Activated naive CD4-positive, alpha-beta T cell treated with anti-CD3 and anti-CD28 coated beads, Interleukin-2, amount 10 ng/mL, durations not matched to agents 7 days and 5 days (primary cell): ENCODE measurements at regions of chr15 and their contacts with region 1.

Region 1: DNA sequence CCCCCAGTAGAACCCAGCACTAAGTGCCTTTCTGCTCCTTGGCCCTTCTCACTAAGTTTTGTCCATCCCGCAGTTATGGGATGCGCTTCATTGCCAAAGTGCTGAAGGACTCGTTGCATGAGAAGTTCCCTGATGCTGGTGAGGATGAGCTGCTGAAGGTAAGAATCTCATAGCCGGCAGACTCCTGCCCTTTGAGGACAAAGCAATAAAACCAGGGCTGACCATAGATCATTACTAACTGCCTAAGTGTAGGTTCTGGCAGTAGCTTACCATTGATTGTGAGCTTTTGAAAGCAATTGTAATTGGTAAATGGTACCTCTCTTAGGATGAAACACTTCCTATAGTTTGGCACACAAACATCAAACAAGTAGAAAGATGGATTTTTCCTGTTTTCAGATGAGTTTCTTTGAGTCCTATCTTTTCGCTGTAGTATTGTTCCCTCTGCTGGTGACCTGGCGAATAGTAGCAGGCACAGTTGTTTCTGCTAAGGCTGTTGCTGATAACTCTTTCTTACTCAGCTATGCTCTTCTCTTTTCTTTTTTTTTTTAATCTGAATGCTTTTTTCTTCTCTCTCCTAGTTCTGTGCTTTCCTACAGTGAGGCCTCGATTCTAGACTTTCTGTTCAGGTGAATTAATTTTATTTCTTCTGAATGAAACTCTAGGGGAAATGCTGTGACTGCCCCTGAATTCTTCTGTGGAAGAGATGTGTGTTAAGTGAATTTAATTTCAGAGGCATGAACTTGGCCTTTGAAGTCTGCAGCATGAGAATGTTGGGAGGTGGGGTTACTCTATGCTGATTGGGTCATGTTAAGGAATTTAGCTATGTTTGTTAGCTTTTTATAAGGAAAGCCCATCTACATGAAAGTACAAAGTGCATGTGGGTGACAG is 47.4 kb upstream of the CRTC3 start:
- DNase-seq: peak; percentile 68
- H3K4me3 Mint-ChIP-seq: no peak overlapping the region
- H3K27ac Mint-ChIP-seq: peak overlapping the region; percentile 50
- H3K4me1 Mint-ChIP-seq: peaks cover 39% of the 10 kb centered on the region
- H3K27me3 Mint-ChIP-seq: no peaks in the 10 kb centered on the region

Region 2: DNA sequence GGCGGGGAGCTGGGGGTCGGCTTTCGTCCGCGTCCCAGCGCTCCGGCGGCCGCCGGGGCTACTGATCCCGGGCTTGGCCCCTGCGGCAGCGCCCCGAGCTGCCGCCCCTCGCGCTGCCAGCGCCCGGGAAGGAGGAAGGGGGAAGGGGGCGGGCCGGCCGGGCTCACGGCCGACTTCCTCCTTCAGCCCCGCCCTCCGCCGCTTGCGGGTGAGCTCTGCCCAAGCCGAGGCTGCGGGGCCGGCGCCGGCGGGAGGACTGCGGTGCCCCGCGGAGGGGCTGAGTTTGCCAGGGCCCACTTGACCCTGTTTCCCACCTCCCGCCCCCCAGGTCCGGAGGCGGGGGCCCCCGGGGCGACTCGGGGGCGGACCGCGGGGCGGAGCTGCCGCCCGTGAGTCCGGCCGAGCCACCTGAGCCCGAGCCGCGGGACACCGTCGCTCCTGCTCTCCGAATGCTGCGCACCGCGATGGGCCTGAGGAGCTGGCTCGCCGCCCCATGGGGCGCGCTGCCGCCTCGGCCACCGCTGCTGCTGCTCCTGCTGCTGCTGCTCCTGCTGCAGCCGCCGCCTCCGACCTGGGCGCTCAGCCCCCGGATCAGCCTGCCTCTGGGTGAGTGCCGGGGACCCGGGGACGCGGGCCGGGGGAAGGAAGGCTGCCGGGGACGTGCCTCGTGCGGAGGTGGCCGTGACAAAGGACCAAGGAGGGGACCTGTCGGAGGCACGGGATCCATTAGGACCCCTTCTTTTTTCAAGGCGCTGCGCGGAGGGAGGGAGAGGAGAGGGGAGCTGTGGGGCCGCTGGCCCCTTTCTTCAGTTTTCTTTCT is 281.0 kb before region 1 on chr15 and contains the start of gene SEMA4B:
- CTCF ChIA-PET with region 1: no interaction called
- DNase-seq: peak; percentile 87
- H3K4me3 Mint-ChIP-seq: peak within 1 kb of the TSS; percentile 83
- H3K27ac Mint-ChIP-seq: peak within 1 kb of the TSS; percentile 64
- H3K4me1 Mint-ChIP-seq: peaks cover 26% of the 10 kb centered on the region
- H3K27me3 Mint-ChIP-seq: peaks cover 22% of the 10 kb centered on the region

Region 3: DNA sequence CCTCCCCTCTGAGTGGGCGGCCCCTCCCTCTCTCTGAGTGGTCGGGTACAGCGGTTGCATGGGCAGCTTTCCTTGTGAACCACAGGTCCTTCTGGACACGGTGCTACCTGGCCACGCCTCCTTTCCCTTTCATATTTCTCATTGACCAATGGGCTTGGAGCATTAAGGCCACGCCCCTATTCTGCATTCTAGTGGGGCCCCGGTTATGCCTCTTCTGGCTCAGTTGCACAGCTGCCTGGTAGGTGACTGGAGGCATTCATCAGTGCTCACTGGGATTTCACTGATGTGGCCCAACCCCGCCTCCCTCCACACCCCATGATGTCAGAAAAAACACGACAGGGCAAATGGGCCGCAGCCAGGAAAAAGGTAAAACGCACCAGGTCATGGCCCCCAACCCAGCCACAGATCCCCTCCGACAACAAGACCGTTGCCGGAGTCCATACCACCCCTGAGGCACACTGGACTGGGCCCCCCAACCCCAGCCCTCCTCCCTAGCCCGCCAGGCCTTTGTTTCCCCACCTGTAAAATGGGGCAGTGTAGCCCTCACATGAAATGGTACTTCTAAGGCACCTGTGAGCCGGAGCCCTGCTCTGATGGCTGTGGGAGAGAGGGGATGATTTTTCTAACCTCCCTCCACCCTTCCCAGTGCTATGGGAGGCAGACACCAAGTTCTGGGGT is 190.6 kb before region 1 on chr15:
- CTCF ChIA-PET with region 1: interaction called, 18 read pairs
- DNase-seq: peak; percentile 44
- H3K4me3 Mint-ChIP-seq: no peak overlapping the region
- H3K27ac Mint-ChIP-seq: no peak overlapping the region
- H3K4me1 Mint-ChIP-seq: peaks cover 9% of the 10 kb centered on the region
- H3K27me3 Mint-ChIP-seq: peaks cover 24% of the 10 kb centered on the region

Region 4: GRCh38 chr15:90325726-90326125 is 156.6 kb before region 1 on chr15:
- CTCF ChIA-PET with region 1: interaction called, 137 read pairs
- DNase-seq: no peak
- H3K4me3 Mint-ChIP-seq: no peak overlapping the region
- H3K27ac Mint-ChIP-seq: no peak overlapping the region
- H3K4me1 Mint-ChIP-seq: no peaks in the 10 kb centered on the region
- H3K27me3 Mint-ChIP-seq: peaks cover 13% of the 10 kb centered on the region

Region 5: GRCh38 chr15:90362936-90363212 is 119.5 kb before region 1 on chr15:
- CTCF ChIA-PET with region 1: interaction called, 74 read pairs
- DNase-seq: no peak
- H3K4me3 Mint-ChIP-seq: no peak overlapping the region
- H3K27ac Mint-ChIP-seq: no peak overlapping the region
- H3K4me1 Mint-ChIP-seq: peaks cover 29% of the 10 kb centered on the region
- H3K27me3 Mint-ChIP-seq: peaks cover 8% of the 10 kb centered on the region

Region 6: DNA sequence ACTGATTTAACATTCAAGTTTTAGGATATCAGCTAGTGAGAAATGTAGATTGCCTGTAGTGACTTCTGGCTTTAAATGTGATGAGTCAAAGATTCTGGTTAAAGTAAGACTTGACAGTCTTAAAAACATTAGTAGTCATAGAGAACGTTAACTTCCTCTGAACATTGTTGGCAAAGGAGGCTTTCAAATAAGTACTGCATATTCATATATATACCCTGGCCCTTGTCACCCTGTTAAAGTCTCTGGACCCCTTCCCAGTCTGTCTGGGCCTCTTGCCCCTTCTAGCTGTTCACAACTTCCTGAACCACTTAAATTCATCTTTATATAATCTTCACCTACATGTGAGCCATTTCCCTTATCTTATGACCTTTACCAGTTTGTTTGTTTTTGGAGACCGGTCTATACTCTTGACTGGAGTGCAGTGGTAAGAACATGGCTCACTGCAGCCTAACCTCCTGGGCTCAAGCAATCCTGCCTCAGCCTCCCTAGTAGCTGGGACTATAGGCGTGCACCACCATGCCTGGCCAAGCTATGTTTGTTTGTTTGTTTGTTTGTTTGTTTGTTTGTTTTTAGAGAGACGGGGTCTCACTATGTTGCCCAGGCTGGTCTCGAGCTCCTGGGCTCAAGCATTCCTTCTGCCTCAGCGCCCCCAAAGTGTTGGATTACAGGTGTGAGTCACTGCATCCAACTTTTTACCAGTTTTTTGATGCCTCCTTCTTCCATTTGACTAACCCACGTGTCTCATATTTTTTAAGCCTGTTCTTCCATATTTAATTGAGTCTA is 17.0 kb before region 1 on chr15:
- CTCF ChIA-PET with region 1: interaction called, 15 read pairs
- DNase-seq: no peak
- H3K4me3 Mint-ChIP-seq: no peak overlapping the region
- H3K27ac Mint-ChIP-seq: no peak overlapping the region
- H3K4me1 Mint-ChIP-seq: peaks cover 10% of the 10 kb centered on the region
- H3K27me3 Mint-ChIP-seq: no peaks in the 10 kb centered on the region